Transverse colon (tissue), 4 donors: ENCODE measurements at regions of chr1 and their contacts with region 1.

Region 1: GRCh38 chr1:235225299-235225698 is 64.2 kb upstream of the RBM34 start:
- DNase-seq: no peak
- H3K4me3 ChIP-seq: no peak overlapping the region
- H3K27ac ChIP-seq: no peak overlapping the region
- H3K4me1 ChIP-seq: no peaks in the 10 kb centered on the region
- H3K27me3 ChIP-seq: no peaks in the 10 kb centered on the region
- CTCF ChIP-seq: no peak
- EP300 ChIP-seq: no peak
- POLR2A ChIP-seq: no peak

Region 2: DNA sequence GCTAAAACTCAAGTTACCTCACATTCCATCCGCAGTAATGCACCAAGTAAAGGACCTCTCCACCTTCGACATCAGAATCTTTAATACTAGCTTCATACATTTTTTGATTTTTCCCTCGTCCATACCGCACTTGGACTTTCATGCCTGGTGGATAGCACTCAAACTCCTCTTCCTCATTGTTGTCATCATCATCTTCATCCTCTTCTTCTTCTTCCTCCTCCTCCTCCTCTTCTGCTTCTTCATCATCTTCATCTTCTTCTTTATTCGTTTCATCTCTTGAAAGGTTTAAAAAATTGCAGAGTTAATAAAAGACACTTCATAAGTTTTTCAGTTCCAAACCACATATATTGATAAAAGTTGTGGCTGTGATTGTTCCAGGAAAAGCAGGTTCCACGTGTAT is 11.5 kb before region 1 on chr1:
- in situ Hi-C with region 1: no loop called
- intact Hi-C with region 1: loop called (anchors 1 kb)
- DNase-seq: no peak
- H3K4me3 ChIP-seq: no peak overlapping the region
- H3K27ac ChIP-seq: no peak overlapping the region
- H3K4me1 ChIP-seq: no peaks in the 10 kb centered on the region
- H3K27me3 ChIP-seq: no peaks in the 10 kb centered on the region
- CTCF ChIP-seq: no peak
- EP300 ChIP-seq: no peak
- POLR2A ChIP-seq: no peak